Endothelial cell of umbilical vein (primary cell): ENCODE measurements at regions of chr2 and their contacts with region 1.

Region 1: DNA sequence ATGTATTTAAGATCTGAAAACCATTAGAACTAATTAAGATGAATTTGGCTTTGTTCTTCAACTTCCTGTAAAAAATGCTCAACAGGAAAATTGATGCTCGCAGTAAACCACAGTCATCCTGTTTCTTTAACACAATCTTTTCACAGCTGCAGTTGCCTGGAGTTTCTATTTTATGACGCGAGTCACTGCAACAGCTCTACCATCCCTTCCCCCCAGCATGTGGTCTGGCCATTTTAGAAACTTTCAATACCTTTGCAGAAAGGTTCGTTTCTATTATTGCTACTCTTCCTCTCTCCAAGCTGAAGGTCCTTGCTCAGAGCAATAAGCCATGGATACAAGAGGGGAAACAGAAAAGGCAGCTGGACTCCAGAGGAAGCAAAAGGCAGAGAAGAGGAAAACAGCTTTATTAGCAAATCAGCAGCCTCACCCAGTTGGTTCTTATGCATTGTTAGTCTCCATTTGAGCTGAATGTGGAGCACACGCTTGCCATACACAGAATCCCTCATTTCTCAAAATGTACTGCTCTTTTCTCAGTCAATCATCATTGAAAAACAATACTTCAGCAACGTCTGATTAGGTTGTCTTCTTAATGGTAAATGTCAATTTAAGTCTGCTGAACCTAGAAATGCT is 3.9 kb downstream of the WIPF1 start:
- DNase-seq: peak; percentile 89
- H3K4me3 ChIP-seq: peak overlapping the region in 1 of 3 experiments; percentile 45
- H3K27ac ChIP-seq: peak overlapping the region; percentile 70
- H3K4me1 ChIP-seq: peaks cover 43% of the 10 kb centered on the region
- H3K27me3 ChIP-seq: no peaks in the 10 kb centered on the region
- CTCF ChIP-seq: no peak
- POLR2A ChIP-seq: peak; percentile 50

Region 2: DNA sequence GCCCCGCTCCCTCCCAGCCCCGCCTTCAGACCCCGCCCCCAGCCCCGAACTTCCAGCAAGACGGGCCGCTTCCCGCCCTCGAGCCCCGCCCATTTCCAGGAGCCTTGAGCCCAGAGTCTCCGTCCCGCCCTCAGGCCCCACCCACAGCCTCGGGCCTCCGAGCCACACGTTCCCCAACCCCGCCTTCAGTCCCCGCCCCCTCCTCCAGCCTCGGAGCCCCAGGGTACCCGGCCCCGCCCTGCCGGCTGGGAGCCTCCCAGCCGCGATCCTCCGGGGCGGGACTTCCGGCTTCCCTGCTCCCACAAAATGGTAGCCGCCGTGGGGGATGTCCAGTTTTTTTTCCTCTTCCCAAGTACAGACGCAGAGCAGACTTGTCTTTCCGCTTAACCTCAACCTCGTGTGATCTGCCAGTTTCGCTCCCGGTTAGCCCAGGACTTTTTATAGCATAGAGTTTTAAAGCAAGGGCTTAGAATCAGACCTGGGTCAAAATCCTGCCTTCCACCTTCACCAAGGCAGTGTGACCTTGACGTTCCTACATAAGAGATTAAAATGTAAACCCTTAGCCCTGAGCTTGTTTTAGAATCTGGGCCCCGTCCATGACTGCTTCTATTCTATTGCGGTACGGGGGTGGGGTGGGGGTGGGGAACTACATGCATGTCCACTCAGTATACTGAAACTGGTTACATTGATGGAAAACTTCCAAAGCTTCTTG is 106.4 kb before region 1 on chr2:
- CTCF ChIA-PET with region 1: no interaction called
- POLR2A ChIA-PET with region 1: no interaction called
- dilution Hi-C with region 1: no loop called
- intact Hi-C with region 1: loop called (anchors 2 kb)
- DNase-seq: peak; percentile 98
- H3K4me3 ChIP-seq: peak overlapping the region; percentile 64 to 94 (median 84)
- H3K27ac ChIP-seq: peak overlapping the region; percentile 81
- H3K4me1 ChIP-seq: peaks cover 10% of the 10 kb centered on the region
- H3K27me3 ChIP-seq: peaks cover 1 to 4% of the 10 kb centered on the region in 2 experiments
- CTCF ChIP-seq: no peak
- POLR2A ChIP-seq: peak; percentile 86

Region 3: DNA sequence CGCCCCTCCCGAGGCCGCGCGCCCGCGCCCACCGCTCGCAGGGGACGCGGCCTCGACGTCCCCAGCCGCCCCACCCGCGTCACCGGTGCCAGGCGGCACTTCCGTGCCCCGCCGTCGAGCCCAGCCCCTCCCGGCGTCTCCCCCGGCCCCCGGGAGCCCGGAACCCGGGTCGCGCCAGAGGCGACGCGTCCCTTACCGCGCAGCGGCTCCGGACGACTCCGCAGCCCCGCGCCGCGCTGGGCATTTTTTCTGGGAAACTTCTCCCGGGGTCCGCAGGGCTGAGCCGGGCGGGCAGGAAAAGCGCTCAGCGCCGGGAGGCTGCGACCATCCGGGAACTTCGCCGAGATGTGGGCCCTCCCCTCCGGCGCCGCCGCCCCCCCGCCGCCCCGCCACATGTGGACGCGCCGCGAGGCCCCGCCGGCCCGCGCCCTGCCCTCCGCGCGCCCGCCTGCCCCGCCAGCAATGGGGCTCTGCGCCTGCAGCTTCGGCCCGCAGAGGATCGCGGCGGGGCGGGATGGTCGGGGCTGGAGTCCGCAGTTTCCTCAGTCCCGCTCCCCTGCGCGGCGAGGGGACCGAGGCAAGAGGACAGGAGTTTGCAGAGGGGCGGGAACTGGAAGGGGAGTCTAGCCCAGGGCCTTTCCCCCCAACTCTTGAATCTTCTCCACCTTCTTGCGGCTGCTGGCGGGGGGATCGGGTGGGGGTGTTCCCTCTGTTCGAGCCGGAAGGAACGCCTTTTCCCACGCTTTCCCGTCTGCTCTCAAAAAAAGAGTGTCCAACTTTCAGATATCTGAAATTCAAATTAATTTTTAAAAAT is 89.1 kb after region 1 on chr2:
- CTCF ChIA-PET with region 1: interaction called, 6 read pairs
- POLR2A ChIA-PET with region 1: no interaction called
- dilution Hi-C with region 1: no loop called
- intact Hi-C with region 1: loop called (anchors 5 kb)
- DNase-seq: peak; percentile 55
- H3K4me3 ChIP-seq: peak overlapping the region; percentile 91 to 94 (median 93)
- H3K27ac ChIP-seq: peak overlapping the region; percentile 32
- H3K4me1 ChIP-seq: peaks cover 16% of the 10 kb centered on the region
- H3K27me3 ChIP-seq: peaks cover 3 to 5% of the 10 kb centered on the region in 2 experiments
- CTCF ChIP-seq: no peak
- POLR2A ChIP-seq: no peak

Region 4: GRCh38 chr2:175004980-175005732 is 411.5 kb after region 1 on chr2 and contains the start of gene CHN1:
- CTCF ChIA-PET with region 1: no interaction called
- POLR2A ChIA-PET with region 1: no interaction called
- dilution Hi-C with region 1: no loop called
- intact Hi-C with region 1: loop called (anchors 10 kb)
- DNase-seq: peak; percentile 85
- H3K4me3 ChIP-seq: peak within 1 kb of the TSS; percentile 70 to 89 (median 83)
- H3K27ac ChIP-seq: peak within 1 kb of the TSS; percentile 35
- H3K4me1 ChIP-seq: peaks cover 18% of the 10 kb centered on the region
- H3K27me3 ChIP-seq: peaks cover 0 to 3% of the 10 kb centered on the region in 2 experiments
- CTCF ChIP-seq: no peak
- POLR2A ChIP-seq: peak; percentile 71
- total RNA-seq, gene CHN1: 23.3 and 29.0 TPM in 2 replicates